Right ventricle myocardium superior (tissue), 1 donor: ENCODE measurements at regions of chr11 and their contacts with region 1.

Region 1: DNA sequence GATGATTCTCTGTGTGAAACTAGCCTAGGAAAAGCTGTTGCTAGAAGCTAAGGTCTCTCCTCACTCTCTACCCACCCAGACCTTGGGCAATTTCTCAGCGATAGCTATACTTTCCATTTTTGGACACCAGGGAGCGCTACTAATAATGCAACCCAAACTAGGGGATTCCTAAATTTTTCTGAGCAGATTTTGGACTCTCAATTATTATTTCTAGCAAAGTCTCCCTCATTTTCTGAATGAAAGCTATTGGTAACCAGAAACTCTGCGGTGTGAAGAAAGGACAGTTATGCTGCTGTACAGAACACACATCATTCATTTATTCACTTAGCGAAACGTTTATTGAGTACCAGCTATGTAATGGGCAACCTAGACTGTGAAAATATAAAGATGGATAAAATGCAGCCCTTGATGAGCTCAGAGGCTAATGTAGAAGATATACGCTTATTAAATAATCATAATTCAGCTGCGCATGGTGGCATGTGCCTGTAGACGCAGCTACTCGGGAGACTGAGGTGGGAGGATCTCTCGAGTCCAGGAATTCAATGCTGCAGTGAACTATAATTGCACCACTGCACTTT is 6.1 kb upstream of the STIM1 start:
- DNase-seq: no peak
- ATAC-seq: peak; percentile 72

Region 2: GRCh38 chr11:4072668-4073285 is 223.4 kb after region 1 on chr11:
- intact Hi-C with region 1: loop called (anchors 2 kb)
- DNase-seq: no peak
- ATAC-seq: peak; percentile 96

Region 3: DNA sequence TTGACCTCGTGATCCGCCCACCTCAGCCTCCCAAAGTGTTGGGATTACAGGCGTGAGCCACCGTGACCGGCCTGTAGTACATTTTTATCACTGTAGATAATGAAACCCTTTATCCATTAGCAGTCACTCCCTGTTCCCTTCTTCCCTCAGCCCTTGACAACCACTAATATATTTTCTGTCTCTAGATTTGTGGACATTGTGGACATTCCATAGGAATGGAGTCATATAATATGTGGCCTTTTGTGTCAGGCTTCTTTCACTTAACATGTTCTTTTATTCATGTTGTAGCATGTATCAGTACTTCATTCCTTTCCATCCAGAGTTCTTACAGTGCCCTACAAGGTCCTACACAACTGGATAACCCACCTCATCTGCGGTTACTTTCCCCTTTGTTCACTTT is 275.8 kb after region 1 on chr11:
- intact Hi-C with region 1: no loop called
- DNase-seq: no peak
- ATAC-seq: no peak